Activated naive CD8-positive, alpha-beta T cell treated with anti-CD3 and anti-CD28 coated beads, Interleukin-2, amount 10 ng/mL, durations not matched to agents 7 days and 5 days (primary cell): ENCODE measurements at regions of chr3 and their contacts with region 1.

Region 1: DNA sequence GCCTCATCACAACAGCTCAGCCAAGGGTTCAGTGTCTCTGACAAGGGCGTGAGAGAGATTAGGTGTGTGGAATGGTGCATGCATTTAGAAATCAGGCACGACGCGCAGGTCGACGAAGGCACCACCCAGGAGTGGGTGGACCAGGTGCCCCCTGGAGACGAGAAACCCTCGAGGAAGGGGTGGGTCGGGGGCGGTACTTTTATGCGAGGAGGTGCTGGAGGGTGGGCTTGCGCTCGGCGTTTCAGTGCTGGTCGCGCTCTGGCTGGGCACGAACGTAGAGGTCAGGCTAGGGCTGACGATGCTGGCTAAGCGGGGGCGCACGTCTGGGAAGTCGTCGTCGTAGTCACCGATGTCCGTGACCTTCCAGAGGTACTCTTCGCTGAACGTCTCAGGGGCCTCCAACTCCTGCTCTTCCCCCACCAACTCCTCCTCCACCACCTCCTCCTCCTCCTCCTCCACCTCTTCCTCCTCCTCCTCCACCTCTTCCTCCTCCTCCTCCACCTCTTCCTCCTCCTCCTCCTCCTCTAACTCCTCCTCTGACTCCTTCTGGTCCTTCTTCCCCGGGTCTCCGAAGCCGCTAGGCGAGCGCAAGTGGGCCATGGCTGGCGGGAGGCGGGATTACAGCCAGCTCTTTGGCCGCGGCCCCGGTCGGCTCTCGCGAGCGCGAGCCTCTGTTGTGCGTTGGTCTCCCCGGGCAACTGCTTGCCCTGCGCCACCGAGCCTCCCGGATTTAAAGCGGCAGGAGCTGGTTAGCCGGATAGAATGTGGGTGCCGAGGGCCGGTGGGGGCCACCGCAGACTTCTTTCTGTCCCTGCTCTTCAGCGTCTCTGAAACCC is at the start of gene ERICH6:
- DNase-seq: peak; percentile 89
- ATAC-seq: peak; percentile 89
- H3K4me3 Mint-ChIP-seq: peak within 1 kb of the TSS; percentile 92
- H3K27ac Mint-ChIP-seq: peak within 1 kb of the TSS; percentile 95
- H3K4me1 Mint-ChIP-seq: peaks cover 21% of the 10 kb centered on the region
- H3K27me3 Mint-ChIP-seq: peaks cover 18% of the 10 kb centered on the region
- total RNA-seq, gene ERICH6: 0.23 TPM in 1 of 2 experiments, not detected in the other

Region 2: DNA sequence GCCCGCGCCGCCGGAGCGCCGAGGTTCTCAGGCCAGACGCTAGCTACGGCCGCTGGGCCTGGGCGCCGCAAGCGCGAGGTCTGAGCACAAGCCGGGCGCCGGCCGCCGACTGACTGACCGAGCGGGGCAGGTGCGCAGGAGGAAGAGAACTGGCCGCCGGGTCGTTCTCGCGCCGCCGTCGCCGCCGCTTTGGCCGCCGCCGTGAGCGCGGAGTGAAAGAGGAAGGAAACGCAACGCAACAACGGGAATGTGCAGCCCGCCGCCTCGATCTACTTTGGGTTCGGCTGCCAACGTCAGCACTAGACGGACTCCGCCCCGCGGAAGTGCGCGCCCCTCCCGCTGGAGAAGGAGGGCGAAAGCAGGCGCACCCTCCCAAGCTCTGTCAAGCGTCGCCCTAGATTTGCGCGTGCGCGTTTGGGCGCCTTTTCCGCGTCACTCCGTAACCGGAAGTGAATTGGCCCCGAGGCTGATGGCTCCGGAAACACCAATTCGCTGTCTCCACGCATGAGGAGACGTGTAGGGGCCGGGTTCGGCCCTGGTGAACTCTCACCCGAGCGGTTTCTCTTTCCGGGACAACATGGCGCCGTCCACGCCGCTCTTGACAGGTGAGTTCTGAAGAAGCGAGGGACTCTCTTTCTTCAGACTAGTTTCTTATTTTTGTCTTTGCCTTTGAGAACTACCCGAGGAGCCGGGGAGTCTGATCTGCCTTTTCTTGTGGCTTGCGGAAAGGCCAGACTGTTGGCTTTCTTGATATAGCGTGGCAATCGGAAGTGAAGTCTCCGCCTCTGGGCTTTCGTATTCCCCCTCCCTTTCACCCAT is 157.1 kb before region 1 on chr3 and contains the starts of genes EIF2A and SERP1:
- POLR2A ChIA-PET with region 1: interaction called, 32 read pairs
- DNase-seq: peak; percentile 98
- ATAC-seq: peak; percentile 92
- H3K4me3 Mint-ChIP-seq: peak within 1 kb of the TSS; percentile 100
- H3K27ac Mint-ChIP-seq: peak within 1 kb of the TSS; percentile 96
- H3K4me1 Mint-ChIP-seq: peaks cover 46% of the 10 kb centered on the region
- H3K27me3 Mint-ChIP-seq: no peaks in the 10 kb centered on the region
- total RNA-seq, gene EIF2A: 82.2 to 84.2 TPM
- total RNA-seq, gene SERP1: 89.4 to 89.8 TPM

Region 3: GRCh38 chr3:150603153-150603979 is 100.2 kb before region 1 on chr3 and contains the start of gene SELENOT:
- POLR2A ChIA-PET with region 1: interaction called, 47 read pairs
- DNase-seq: peak; percentile 98
- ATAC-seq: peak; percentile 91
- H3K4me3 Mint-ChIP-seq: peak within 1 kb of the TSS; percentile 88
- H3K27ac Mint-ChIP-seq: peak within 1 kb of the TSS; percentile 92
- H3K4me1 Mint-ChIP-seq: peaks cover 46% of the 10 kb centered on the region
- H3K27me3 Mint-ChIP-seq: no peaks in the 10 kb centered on the region
- total RNA-seq, gene SELENOT: 92.5 to 94.2 TPM

Region 4: GRCh38 chr3:150635526-150635925 is 68.0 kb before region 1 on chr3:
- POLR2A ChIA-PET with region 1: interaction called, 13 read pairs
- DNase-seq: no peak
- ATAC-seq: peak; percentile 92
- H3K4me3 Mint-ChIP-seq: peak overlapping the region; percentile 63
- H3K27ac Mint-ChIP-seq: peak overlapping the region; percentile 81
- H3K4me1 Mint-ChIP-seq: peaks cover 22% of the 10 kb centered on the region
- H3K27me3 Mint-ChIP-seq: peaks cover 2% of the 10 kb centered on the region

Region 5: GRCh38 chr3:150666167-150666566 is 37.4 kb before region 1 on chr3:
- POLR2A ChIA-PET with region 1: interaction called, 14 read pairs
- DNase-seq: peak; percentile 48
- ATAC-seq: peak; percentile 94
- H3K4me3 Mint-ChIP-seq: peak overlapping the region; percentile 47
- H3K27ac Mint-ChIP-seq: peak overlapping the region; percentile 18
- H3K4me1 Mint-ChIP-seq: peaks cover 25% of the 10 kb centered on the region
- H3K27me3 Mint-ChIP-seq: peaks cover 31% of the 10 kb centered on the region

Region 6: DNA sequence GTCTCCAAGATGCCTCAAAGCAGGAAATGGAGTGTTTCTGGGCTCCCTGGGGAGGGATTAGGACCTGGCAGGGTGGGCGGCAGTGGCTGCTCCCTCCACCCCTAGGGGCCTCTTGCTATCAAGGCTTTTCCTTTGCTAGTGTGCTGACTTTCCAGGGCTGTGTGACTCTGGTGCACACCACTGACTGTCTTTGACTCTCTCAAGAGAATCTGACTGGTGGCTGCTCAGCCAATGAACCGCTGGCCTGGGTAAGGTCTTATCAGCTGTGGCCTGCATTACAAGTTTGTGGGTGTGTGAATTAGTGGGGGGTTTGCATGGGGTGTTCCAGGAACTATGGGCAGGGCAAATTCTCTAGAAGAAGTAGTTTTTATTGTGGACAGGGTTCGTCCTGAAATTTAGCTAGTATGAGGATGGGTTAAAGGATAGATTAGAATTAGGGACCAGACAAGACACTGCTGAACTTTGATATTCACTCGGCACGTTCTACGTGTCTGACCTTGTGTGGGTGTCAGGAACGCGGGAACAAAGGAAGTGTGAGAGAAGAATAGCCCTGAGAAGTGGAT is 29.9 kb after region 1 on chr3:
- POLR2A ChIA-PET with region 1: no interaction called
- DNase-seq: no peak
- ATAC-seq: no peak
- H3K4me3 Mint-ChIP-seq: no peak overlapping the region
- H3K27ac Mint-ChIP-seq: no peak overlapping the region
- H3K4me1 Mint-ChIP-seq: peaks cover 12% of the 10 kb centered on the region
- H3K27me3 Mint-ChIP-seq: no peaks in the 10 kb centered on the region